Activated T-helper 2 cell treated with anti-CD3 and anti-CD28 coated beads, Interferon-gamma antibody, Interleukin-2, Interleukin-4, amounts not matched to agents 10 μg/mL and 5 μg/mL and 100 μg/mL, durations not matched to agents 14 hours and 24 hours and 36 hours (primary cell): ENCODE measurements at regions of chr12 and their contacts with region 1.

Region 1: DNA sequence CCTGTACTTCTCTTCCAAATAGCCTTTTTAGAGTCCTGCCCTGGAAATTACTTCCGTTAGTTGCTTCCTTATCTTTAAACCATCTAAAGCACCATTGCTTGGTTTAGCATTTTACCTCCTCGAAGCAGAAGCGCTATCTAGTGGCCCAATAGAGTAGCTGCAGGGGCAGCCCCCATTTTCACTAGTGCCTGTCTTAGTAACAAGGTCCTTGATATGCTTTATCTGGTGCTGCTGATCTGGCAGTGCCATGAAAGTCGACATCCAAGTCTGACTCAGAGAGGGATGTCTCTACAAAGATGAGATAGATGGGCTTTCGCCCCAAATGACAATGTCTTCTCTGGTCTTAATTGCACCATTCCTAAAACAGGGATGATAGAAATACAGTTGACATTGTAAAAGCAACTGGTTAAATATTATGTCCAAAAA is 25.0 kb upstream of the CIT start:
- DNase-seq: peak; percentile 72
- H3K4me3 Mint-ChIP-seq: no peak overlapping the region
- H3K27ac Mint-ChIP-seq: no peak overlapping the region
- H3K4me1 Mint-ChIP-seq: peaks cover 7% of the 10 kb centered on the region
- H3K27me3 Mint-ChIP-seq: no peaks in the 10 kb centered on the region

Region 2: DNA sequence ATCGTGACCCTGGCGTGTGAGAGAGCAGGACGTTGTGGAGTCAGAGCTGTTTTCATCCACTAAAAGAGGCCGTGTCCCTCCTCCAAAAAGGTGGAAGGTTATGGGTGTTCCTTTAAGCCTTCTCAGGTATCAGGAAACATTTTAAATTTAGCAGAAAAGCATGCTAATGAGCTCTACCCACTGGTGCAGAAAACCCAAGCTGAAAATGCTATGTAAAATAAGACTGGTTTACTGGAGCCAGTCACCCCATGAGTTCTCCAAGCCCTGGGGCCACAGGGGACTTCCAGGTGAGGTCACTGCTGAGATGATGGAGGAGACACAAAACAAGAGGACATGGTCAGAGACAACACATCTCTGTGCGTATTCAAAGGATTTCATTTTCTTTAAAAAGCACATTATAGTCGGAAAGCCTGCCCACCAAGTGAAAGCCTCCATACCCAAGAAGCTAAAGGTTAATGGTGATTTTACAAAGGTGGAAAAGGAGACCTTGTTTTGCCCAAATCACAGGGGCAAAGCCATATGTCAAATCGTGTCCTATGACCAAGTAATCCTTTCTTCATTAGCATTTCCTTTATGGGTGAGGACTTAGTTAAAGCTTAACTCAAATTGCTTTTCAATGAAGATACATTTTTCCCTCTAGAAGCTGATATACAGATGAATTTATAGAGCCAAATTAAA is 220.0 kb before region 1 on chr12:
- intact Hi-C with region 1: loop called (anchors 5 kb)
- DNase-seq: no peak
- H3K4me3 Mint-ChIP-seq: no peak overlapping the region
- H3K27ac Mint-ChIP-seq: peak overlapping the region; percentile 92
- H3K4me1 Mint-ChIP-seq: peaks cover 18% of the 10 kb centered on the region
- H3K27me3 Mint-ChIP-seq: no peaks in the 10 kb centered on the region